Left colon (tissue), 2 donors: ENCODE measurements at regions of chr16 and their contacts with region 1.

Region 1: DNA sequence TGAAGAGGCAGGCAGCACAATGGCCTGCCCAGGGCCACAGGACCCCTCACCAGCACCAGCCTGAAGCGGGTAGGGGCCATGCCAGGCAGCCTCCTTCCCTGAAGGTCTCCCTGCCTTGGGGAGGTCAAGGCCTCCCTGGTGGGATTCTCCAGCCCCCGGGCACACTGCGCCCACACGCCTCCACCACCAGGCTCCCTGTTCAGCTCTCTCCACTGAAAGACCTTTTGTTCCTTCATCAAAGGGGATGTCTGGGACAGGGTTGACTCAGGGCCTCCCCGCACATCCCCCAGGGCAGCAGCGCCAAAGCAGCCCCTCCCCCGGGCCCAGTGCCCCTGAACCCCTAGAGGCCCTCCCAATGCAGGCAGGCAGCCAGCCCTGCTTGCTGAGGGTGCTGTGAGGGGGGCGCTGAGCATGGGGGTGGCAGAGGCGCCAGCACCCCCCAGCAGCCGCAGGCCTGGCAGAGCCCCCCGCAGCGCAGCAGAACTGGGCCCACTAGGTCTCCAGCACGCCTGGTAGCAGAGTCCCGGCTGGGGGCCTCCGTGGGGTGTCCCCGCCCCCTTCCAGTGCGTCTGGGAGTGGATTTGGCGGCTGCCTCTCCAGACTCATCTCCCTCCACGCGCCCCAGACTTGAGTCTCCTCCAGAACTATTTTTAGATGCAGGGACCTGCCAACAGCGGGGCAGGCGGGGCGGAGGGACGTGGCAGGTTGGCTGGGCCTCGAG is 13.1 kb downstream of the BCAR1 start:
- DNase-seq: peak in 1 of 2 donors; percentile 75
- ATAC-seq: no peak

Region 2: DNA sequence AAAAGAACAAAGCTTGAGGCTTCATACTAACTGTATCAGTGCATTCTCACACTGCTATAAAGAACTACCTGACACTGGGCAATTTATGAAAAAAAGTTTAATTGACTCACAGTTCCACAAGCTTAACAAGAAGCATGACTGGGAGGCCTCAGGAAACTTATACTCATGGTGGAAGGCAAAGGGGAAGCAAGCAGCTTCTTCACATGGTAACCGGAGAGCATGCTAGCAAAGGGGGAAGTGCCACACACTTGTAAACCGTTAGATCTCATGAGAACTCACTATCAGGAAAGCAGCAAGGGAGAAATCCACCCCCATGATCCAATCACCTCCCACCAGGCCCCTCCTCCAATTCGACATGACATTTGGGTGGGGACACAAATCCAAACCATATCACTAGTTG is 56.7 kb before region 1 on chr16:
- intact Hi-C with region 1: no loop called
- DNase-seq: no peak
- ATAC-seq: no peak

Region 3: GRCh38 chr16:75385507-75386152 is 147.3 kb after region 1 on chr16:
- intact Hi-C with region 1: loop called (anchors 5 to 10 kb)
- DNase-seq: no peak
- ATAC-seq: peak; percentile 59

Region 4: DNA sequence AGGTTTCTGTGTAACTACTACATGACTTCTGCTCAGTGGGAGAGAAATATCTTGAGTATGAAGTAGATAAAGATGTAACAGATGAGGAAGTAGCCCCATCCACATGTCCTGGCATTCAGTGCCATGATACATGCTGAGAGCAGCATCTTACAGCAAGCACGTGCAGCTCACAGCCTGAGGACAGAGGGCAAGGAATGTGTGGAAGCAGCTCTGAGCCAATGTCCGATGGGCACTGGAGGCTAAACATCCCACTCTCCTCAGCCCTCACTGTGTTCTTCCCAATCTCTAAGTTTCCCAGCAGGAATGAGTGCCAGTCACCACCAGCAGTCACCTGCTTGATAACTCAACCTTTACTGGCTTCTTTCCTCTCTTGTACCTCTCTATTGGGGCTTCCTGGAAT is 154.6 kb after region 1 on chr16:
- intact Hi-C with region 1: loop called (anchors 5 to 10 kb)
- DNase-seq: no peak
- ATAC-seq: no peak